ENCODE measurements at regions of chr3 and their contacts with region 1.

Region 1: GRCh38 chr3:150763122-150763841 is at the start of gene SIAH2:
- DNase-seq: peak; percentile 95 to 98
- ATAC-seq: peak; percentile 95
- H3K4me3 ChIP-seq: peak within 1 kb of the TSS; percentile 78 to 99
- H3K27ac ChIP-seq: peak within 1 kb of the TSS; percentile 63 to 98
- H3K4me1 ChIP-seq: peaks cover 0 to under 1% of the 10 kb centered on the region in 2 donors
- H3K27me3 ChIP-seq: no peaks in the 10 kb centered on the region
- total RNA-seq, gene SIAH2: 18.8 to 22.4 TPM

Region 2: GRCh38 chr3:150462108-150462507 is 301.2 kb before region 1 on chr3:
- intact Hi-C with region 1: no loop called
- DNase-seq: no peak
- ATAC-seq: no peak
- H3K4me3 ChIP-seq: no peak overlapping the region
- H3K27ac ChIP-seq: no peak overlapping the region
- H3K4me1 ChIP-seq: peaks cover 0 to 3% of the 10 kb centered on the region in 2 donors
- H3K27me3 ChIP-seq: no peaks in the 10 kb centered on the region

Region 3: GRCh38 chr3:150546226-150547044 is 216.8 kb before region 1 on chr3 and contains the starts of genes EIF2A and SERP1:
- intact Hi-C with region 1: loop called in 1 of 2 experiments (anchors 2 kb)
- DNase-seq: peak; percentile 99
- ATAC-seq: peak; percentile 99
- H3K4me3 ChIP-seq: peak within 1 kb of the TSS; percentile 90 to 95
- H3K27ac ChIP-seq: peak within 1 kb of the TSS; percentile 61 to 89
- H3K4me1 ChIP-seq: peaks cover 0 to 6% of the 10 kb centered on the region in 2 donors
- H3K27me3 ChIP-seq: no peaks in the 10 kb centered on the region
- total RNA-seq, gene EIF2A: 72.8 to 82.7 TPM
- total RNA-seq, gene SERP1: 74.4 to 78.8 TPM

Region 4: DNA sequence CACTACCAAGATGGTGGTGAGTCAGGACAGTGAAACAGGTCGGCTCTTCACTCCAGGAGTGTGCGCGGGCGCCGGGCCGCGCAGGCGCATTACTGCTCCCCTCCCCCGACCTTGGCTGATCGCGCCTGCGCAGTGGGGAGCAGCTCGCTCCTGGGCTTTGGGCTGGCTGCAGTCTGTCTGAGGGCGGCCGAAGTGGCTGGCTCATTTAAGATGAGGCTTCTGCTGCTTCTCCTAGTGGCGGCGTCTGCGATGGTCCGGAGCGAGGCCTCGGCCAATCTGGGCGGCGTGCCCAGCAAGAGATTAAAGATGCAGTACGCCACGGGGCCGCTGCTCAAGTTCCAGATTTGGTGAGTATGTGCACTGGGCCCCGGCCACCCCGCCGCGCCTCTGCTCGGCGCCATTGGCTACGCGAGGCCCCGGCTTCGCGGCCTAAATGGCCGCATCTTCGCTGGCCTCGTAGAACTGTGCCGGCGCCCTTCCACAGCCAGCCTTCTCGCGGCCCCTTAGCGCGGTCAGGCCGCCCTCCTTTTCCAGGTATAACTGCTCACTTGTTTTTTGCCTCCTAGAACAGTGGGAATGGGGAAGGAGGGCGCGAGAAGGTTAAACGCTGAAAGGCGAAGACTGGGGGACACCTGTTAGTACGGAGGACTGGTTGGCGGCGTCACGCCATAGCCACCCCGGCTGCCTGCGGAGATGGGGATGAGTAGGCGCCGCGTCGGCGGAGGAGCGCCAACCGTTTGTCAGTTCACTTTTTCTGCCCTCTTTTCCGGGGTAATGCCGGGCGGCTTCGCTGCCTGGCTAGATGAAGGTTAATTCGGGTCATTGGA is 159.9 kb before region 1 on chr3 and contains the start of gene SELENOT:
- intact Hi-C with region 1: loop called in 1 of 2 experiments (anchors 5 kb)
- DNase-seq: peak; percentile 96 to 98
- ATAC-seq: peak; percentile 98
- H3K4me3 ChIP-seq: peak within 1 kb of the TSS; percentile 51 to 88
- H3K27ac ChIP-seq: peak within 1 kb of the TSS; percentile 64 to 71
- H3K4me1 ChIP-seq: peaks cover 0 to 1% of the 10 kb centered on the region in 2 donors
- H3K27me3 ChIP-seq: no peaks in the 10 kb centered on the region
- total RNA-seq, gene SELENOT: 73.2 to 93.0 TPM

Region 5: GRCh38 chr3:150703299-150704134 is 59.8 kb before region 1 on chr3 and contains the start of gene ERICH6:
- intact Hi-C with region 1: loop called in 1 of 2 experiments (anchors 1 kb)
- DNase-seq: peak; percentile 96 to 97
- ATAC-seq: peak; percentile 98
- H3K4me3 ChIP-seq: peak within 1 kb of the TSS; percentile 23 to 86
- H3K27ac ChIP-seq: peak within 1 kb of the TSS in 1 of 2 donors; percentile 62
- H3K4me1 ChIP-seq: no peaks in the 10 kb centered on the region
- H3K27me3 ChIP-seq: no peaks in the 10 kb centered on the region
- total RNA-seq, gene ERICH6: 0.18 TPM in 1 of 2 donors, not detected in the other

Region 6: GRCh38 chr3:151086484-151087456 is 323.5 kb after region 1 on chr3:
- intact Hi-C with region 1: loop called in 1 of 2 experiments (anchors 10 kb)
- DNase-seq: peak; percentile 82 to 89
- ATAC-seq: peak; percentile 84
- H3K4me3 ChIP-seq: peak overlapping the region; percentile 5 to 66
- H3K27ac ChIP-seq: no peak overlapping the region
- H3K4me1 ChIP-seq: no peaks in the 10 kb centered on the region
- H3K27me3 ChIP-seq: no peaks in the 10 kb centered on the region